Heart left ventricle (tissue), 16 donors: ENCODE measurements at regions of chr14 and their contacts with region 1.

Region 1: DNA sequence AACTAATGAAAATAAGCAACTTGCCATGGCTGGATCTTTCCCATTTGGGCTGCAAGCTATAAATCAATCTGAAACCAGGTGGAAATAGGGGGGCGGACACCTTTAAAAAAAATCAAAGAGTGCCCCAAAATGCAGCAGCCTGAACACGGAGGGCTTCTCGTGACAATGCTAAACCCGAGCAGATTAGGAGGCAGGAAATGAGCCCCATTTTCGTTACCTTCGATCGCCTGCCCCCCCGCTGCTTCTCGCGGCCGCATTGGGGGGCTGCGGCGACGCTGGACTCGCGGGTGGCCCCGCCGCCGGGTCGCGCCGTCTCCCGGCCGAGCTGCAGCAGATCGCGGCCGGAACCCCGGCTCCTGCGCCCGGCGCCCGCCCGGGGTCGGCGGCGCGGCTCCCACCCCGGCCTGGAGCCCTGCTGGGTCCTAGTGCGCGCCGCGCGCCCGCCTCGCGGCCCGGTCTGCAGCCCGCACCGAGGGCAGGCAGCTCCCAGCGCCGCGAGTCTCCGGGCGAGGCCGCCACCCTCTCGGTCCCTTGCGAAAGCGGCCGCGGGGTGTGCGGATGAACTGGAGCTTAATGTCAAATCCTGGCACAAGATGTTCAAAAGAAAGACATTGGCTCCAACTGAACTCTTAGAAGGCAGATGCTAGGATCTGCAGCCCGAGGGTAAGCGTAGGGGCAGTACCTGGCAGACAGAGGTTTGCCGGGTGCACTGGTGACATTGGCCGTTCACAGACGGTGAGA is 201.9 kb upstream of the FOXN3 start:
- DNase-seq: peak; percentile 72 to 90 (median 78)
- ATAC-seq: peak; percentile 81 to 97 (median 89)
- H3K4me3 ChIP-seq: peak overlapping the region; percentile 55 to 91 (median 80)
- H3K27ac ChIP-seq: peak overlapping the region; percentile 52 to 87 (median 82)
- H3K4me1 ChIP-seq: peaks cover 0 to 62% (median 33%) of the 10 kb centered on the region in 12 donors
- H3K27me3 ChIP-seq: no peaks in the 10 kb centered on the region
- CTCF ChIP-seq: peak in 2 of 12 donors; percentile 11 to 16
- POLR2A ChIP-seq: peak in 1 of 2 donors; percentile 51

Region 2: DNA sequence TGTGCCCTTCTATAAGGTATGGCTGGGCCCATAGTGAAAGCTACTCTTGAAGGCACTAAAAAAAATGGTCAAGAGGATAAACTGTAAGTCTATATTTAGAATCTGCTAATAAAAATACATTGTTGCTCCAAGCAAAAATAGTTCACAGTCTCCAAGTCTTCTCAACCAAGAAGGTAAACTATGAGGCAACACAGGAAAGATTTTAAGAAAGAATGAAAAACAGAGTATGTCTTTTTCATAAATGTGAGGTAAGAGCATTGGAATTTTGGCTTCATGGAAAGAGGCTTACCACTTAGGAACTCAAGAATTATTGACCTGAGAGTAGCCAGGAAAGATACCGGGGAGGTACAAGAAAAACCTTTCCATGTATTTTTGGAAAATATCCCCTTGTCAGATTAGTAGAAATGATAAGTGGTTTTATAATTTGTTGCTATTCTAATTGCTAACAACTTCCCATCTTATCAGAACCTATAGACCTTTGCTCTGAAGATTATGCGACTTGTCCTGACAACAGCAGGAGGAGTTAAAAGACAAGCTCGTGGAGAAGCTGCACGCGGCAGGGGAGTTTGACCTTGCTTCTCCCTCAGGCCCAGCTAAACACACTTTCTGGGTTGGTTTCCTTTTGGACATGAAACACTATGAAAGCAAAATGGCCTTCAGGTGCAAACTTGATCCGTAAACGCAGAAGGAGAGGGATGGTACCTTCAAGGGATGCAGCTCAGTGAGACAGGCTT is 440.0 kb before region 1 on chr14:
- intact Hi-C with region 1: loop called in 1 of 10 experiments (anchors 5 kb)
- DNase-seq: no peak
- ATAC-seq: no peak
- H3K4me3 ChIP-seq: no peak overlapping the region
- H3K27ac ChIP-seq: peak overlapping the region in 2 of 12 donors; percentile 19 to 38
- H3K4me1 ChIP-seq: peaks cover 0 to 43% (median 27%) of the 10 kb centered on the region in 12 donors
- H3K27me3 ChIP-seq: no peaks in the 10 kb centered on the region
- CTCF ChIP-seq: no peak
- POLR2A ChIP-seq: no peak

Region 3: GRCh38 chr14:89469210-89470198 is 149.5 kb before region 1 on chr14:
- intact Hi-C with region 1: loop called in 1 of 10 experiments (anchors 10 kb)
- DNase-seq: no peak
- ATAC-seq: peak in 3 of 4 donors; percentile 13 to 45 (median 42)
- H3K4me3 ChIP-seq: no peak overlapping the region
- H3K27ac ChIP-seq: no peak overlapping the region
- H3K4me1 ChIP-seq: peaks cover 0 to 47% (median 3%) of the 10 kb centered on the region in 12 donors
- H3K27me3 ChIP-seq: no peaks in the 10 kb centered on the region
- CTCF ChIP-seq: no peak
- POLR2A ChIP-seq: no peak

Region 4: GRCh38 chr14:89540830-89541470 is 78.0 kb before region 1 on chr14:
- intact Hi-C with region 1: no loop called
- DNase-seq: no peak
- ATAC-seq: no peak
- H3K4me3 ChIP-seq: no peak overlapping the region
- H3K27ac ChIP-seq: no peak overlapping the region
- H3K4me1 ChIP-seq: peaks cover 0 to 17% (median 3%) of the 10 kb centered on the region in 12 donors
- H3K27me3 ChIP-seq: no peaks in the 10 kb centered on the region
- CTCF ChIP-seq: no peak
- POLR2A ChIP-seq: no peak

Region 5: GRCh38 chr14:89578156-89578555 is 40.8 kb before region 1 on chr14:
- intact Hi-C with region 1: loop called in 2 of 10 experiments (anchors 5 kb)
- DNase-seq: no peak
- ATAC-seq: peak in 3 of 4 donors; percentile 31 to 82 (median 57)
- H3K4me3 ChIP-seq: no peak overlapping the region
- H3K27ac ChIP-seq: peak overlapping the region in 1 of 12 donors; percentile 66
- H3K4me1 ChIP-seq: peaks cover 0 to 49% (median 25%) of the 10 kb centered on the region in 12 donors
- H3K27me3 ChIP-seq: no peaks in the 10 kb centered on the region
- CTCF ChIP-seq: no peak
- POLR2A ChIP-seq: no peak